Esophagus muscularis mucosa (tissue), 4 donors: ENCODE measurements at regions of chr6 and their contacts with region 1.

Region 1: GRCh38 chr6:110528101-110528929 is 51.9 kb upstream of the SLC22A16 start:
- DNase-seq: no peak
- H3K4me3 ChIP-seq: no peak overlapping the region
- H3K27ac ChIP-seq: peak overlapping the region in 1 of 4 donors; percentile 7
- H3K4me1 ChIP-seq: peaks cover 3 to 10% (median 9%) of the 10 kb centered on the region in 4 donors
- H3K27me3 ChIP-seq: no peaks in the 10 kb centered on the region
- CTCF ChIP-seq: peak; percentile 73 to 77 (median 73)
- EP300 ChIP-seq: no peak
- POLR2A ChIP-seq: no peak

Region 2: GRCh38 chr6:110233770-110234374 is 294.4 kb before region 1 on chr6:
- intact Hi-C with region 1: no loop called
- DNase-seq: no peak
- H3K4me3 ChIP-seq: no peak overlapping the region
- H3K27ac ChIP-seq: peak overlapping the region in 3 of 4 donors; percentile 6 to 40 (median 16)
- H3K4me1 ChIP-seq: peaks cover 6 to 12% (median 9%) of the 10 kb centered on the region in 4 donors
- H3K27me3 ChIP-seq: no peaks in the 10 kb centered on the region
- CTCF ChIP-seq: no peak
- EP300 ChIP-seq: no peak
- POLR2A ChIP-seq: no peak

Region 3: GRCh38 chr6:110944681-110945151 is 416.4 kb after region 1 on chr6:
- intact Hi-C with region 1: loop called (anchors 5 kb)
- DNase-seq: no peak
- H3K4me3 ChIP-seq: no peak overlapping the region
- H3K27ac ChIP-seq: no peak overlapping the region
- H3K4me1 ChIP-seq: peaks cover 0 to 3% (median 0%) of the 10 kb centered on the region in 4 donors
- H3K27me3 ChIP-seq: no peaks in the 10 kb centered on the region
- CTCF ChIP-seq: no peak
- EP300 ChIP-seq: no peak
- POLR2A ChIP-seq: no peak

Region 4: GRCh38 chr6:111210194-111210728 is 681.9 kb after region 1 on chr6:
- intact Hi-C with region 1: loop called (anchors 5 kb)
- DNase-seq: no peak
- H3K4me3 ChIP-seq: no peak overlapping the region
- H3K27ac ChIP-seq: no peak overlapping the region
- H3K4me1 ChIP-seq: peaks cover 0 to 4% (median 0%) of the 10 kb centered on the region in 4 donors
- H3K27me3 ChIP-seq: no peaks in the 10 kb centered on the region
- CTCF ChIP-seq: peak; percentile 68 to 77 (median 72)
- EP300 ChIP-seq: no peak
- POLR2A ChIP-seq: no peak